ENCODE measurements at regions of chr3 and their contacts with region 1.

Region 1: GRCh38 chr3:49539659-49540560 is 14.4 kb upstream of the BSN start:
- DNase-seq: peak; percentile 94 to 95
- H3K4me3 ChIP-seq: peak overlapping the region; percentile 34 to 52
- H3K27ac ChIP-seq: peak overlapping the region; percentile 84 to 87
- H3K4me1 ChIP-seq: peaks cover 0 to 4% of the 10 kb centered on the region in 2 donors
- H3K27me3 ChIP-seq: no peaks in the 10 kb centered on the region
- CTCF ChIP-seq: peak; percentile 90 to 97 (median 96)
- POLR2A ChIP-seq: peak in 1 of 2 donors; percentile 56

Region 2: GRCh38 chr3:49668414-49668797 is 128.5 kb after region 1 on chr3:
- intact Hi-C with region 1: loop called (anchors 5 kb)
- DNase-seq: no peak
- H3K4me3 ChIP-seq: no peak overlapping the region
- H3K27ac ChIP-seq: no peak overlapping the region
- H3K4me1 ChIP-seq: no peaks in the 10 kb centered on the region
- H3K27me3 ChIP-seq: no peaks in the 10 kb centered on the region
- CTCF ChIP-seq: no peak
- POLR2A ChIP-seq: no peak

Measured in uterus (tissue), 4 donors.